ENCODE measurements at regions of chr6 and their contacts with region 1.

Region 1: DNA sequence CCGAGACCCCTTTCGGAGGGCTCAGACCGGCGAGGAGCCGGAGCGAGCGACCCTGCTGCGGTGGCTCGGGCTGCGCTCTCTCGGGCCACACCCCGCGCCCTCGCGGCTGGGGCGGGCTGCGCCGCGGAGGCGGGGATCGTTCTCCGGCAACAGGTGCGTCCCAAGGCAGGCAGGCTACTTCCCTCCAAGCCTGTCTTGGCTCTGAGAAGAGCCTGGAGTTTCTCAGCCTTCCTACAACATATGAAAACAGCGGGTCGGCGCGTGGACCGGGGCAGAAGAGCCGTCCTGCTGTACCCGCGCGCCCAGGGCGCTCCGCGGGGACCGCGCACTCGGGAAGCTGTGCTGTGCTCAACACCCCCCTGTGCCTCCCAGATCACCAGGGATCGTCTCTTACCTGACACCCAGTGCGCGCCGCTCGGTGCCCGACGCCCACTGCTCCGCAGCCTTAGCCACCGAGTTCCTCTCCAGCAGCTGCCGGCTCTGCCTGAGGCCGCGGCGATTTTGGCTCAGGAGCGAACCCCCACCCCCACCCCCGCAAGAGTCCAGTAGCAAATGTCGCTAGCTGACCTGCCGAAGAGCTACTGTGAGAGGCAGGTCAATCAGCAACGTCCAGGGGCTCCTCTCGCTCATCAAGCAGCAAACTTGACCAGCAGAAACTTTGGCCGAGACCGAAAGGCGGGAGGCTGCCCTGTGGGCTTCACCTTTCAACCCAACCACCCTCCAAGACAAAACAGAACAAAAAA is 3.7 kb upstream of the OLIG3 start:
- DNase-seq: peak in 4 of 9 donors; percentile 17 to 32 (median 28)
- ATAC-seq: peak; percentile 52
- H3K4me3 ChIP-seq: peak overlapping the region; percentile 34
- H3K4me3 Mint-ChIP-seq: peak overlapping the region; percentile 28 to 81 (median 56)
- H3K27ac ChIP-seq: no peak overlapping the region
- H3K27ac Mint-ChIP-seq: peak overlapping the region in 1 of 9 donors; percentile 13
- H3K4me1 ChIP-seq: peaks cover 35 to 36% of the 10 kb centered on the region in 2 donors
- H3K4me1 Mint-ChIP-seq: peaks cover 22 to 52% (median 39%) of the 10 kb centered on the region in 7 donors
- H3K27me3 ChIP-seq: peaks cover 47 to 55% of the 10 kb centered on the region in 2 donors
- H3K27me3 Mint-ChIP-seq: peaks cover 45 to 91% (median 76%) of the 10 kb centered on the region in 5 donors

Region 2: GRCh38 chr6:136921936-136922684 is 575.8 kb before region 1 on chr6 and contains the start of gene SLC35D3:
- CTCF ChIA-PET with region 1: no interaction called
- POLR2A ChIA-PET with region 1: no interaction called
- intact Hi-C with region 1: loop called in 1 of 2 experiments (anchors 2 kb)
- DNase-seq: peak in 4 of 9 donors; percentile 13 to 34 (median 17)
- ATAC-seq: peak; percentile 44
- H3K4me3 ChIP-seq: peak within 1 kb of the TSS; percentile 13
- H3K4me3 Mint-ChIP-seq: peak within 1 kb of the TSS; percentile 79 to 90 (median 84)
- H3K27ac ChIP-seq: no peak within 1 kb of the TSS
- H3K27ac Mint-ChIP-seq: no peak within 1 kb of the TSS
- H3K4me1 ChIP-seq: peaks cover 12 to 19% of the 10 kb centered on the region in 2 donors
- H3K4me1 Mint-ChIP-seq: peaks cover 16 to 31% (median 19%) of the 10 kb centered on the region in 7 donors
- H3K27me3 ChIP-seq: peaks cover 7 to 14% of the 10 kb centered on the region in 2 donors
- H3K27me3 Mint-ChIP-seq: peaks cover 49 to 74% (median 56%) of the 10 kb centered on the region in 5 donors
- total RNA-seq, gene SLC35D3: 0.16 TPM in 1 of 5 experiments, not detected in the others

Region 3: GRCh38 chr6:137552809-137553208 is 54.9 kb after region 1 on chr6:
- CTCF ChIA-PET with region 1: no interaction called
- POLR2A ChIA-PET with region 1: interaction called, 3 read pairs
- intact Hi-C with region 1: loop called in 1 of 2 experiments (anchors 2 kb)
- DNase-seq: no peak
- ATAC-seq: no peak
- H3K4me3 ChIP-seq: no peak overlapping the region
- H3K4me3 Mint-ChIP-seq: no peak overlapping the region
- H3K27ac ChIP-seq: no peak overlapping the region
- H3K27ac Mint-ChIP-seq: no peak overlapping the region
- H3K4me1 ChIP-seq: no peaks in the 10 kb centered on the region
- H3K4me1 Mint-ChIP-seq: peaks cover 0 to 17% (median 8%) of the 10 kb centered on the region in 7 donors
- H3K27me3 ChIP-seq: no peaks in the 10 kb centered on the region
- H3K27me3 Mint-ChIP-seq: peaks cover 0 to 30% (median 0%) of the 10 kb centered on the region in 5 donors